PC-9 (cell line): ENCODE measurements at regions of chr1 and their contacts with region 1.

Region 1: DNA sequence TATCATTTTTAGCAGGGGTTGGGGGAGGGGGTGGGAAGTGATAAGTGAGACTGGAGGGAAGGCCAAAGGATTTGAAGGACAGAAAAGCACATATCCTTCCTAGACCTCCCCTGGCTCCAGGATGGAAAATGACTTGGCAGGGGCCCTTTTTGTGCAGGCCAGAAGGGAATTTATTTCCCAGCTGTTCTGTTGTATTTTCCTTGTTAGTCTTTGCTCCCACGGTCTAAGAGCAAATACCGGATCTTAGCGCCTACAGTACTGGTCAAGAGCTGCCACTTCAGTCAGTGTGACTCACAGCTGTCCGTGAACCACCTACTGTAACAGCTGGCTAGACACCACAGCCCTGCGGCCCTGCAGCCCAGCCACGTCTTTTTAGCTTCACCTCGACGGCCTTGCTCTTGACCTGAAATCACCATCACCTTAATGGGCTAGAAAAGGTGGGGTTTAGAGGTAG is 51.0 kb upstream of the ERRFI1 start:
- DNase-seq: peak; percentile 67 to 92
- H3K4me3 ChIP-seq: no peak overlapping the region
- H3K27ac ChIP-seq: peak overlapping the region; percentile 98
- H3K4me1 ChIP-seq: peaks cover 69% of the 10 kb centered on the region
- H3K27me3 ChIP-seq: no peaks in the 10 kb centered on the region
- CTCF ChIP-seq: no peak

Region 2: GRCh38 chr1:8040586-8040985 is 36.6 kb before region 1 on chr1:
- CTCF ChIA-PET with region 1: no interaction called
- POLR2A ChIA-PET with region 1: interaction called, 6 read pairs
- intact Hi-C with region 1: loop called (anchors 5 kb)
- DNase-seq: peak; percentile 82 to 90
- H3K4me3 ChIP-seq: no peak overlapping the region
- H3K27ac ChIP-seq: peak overlapping the region; percentile 76
- H3K4me1 ChIP-seq: peaks cover 32% of the 10 kb centered on the region
- H3K27me3 ChIP-seq: no peaks in the 10 kb centered on the region
- CTCF ChIP-seq: no peak

Region 3: GRCh38 chr1:8090241-8090702 is 13.1 kb after region 1 on chr1:
- CTCF ChIA-PET with region 1: no interaction called
- POLR2A ChIA-PET with region 1: interaction called, 7 read pairs
- intact Hi-C with region 1: loop called (anchors 1 kb)
- DNase-seq: peak in 1 of 2 experiments; percentile 67
- H3K4me3 ChIP-seq: no peak overlapping the region
- H3K27ac ChIP-seq: peak overlapping the region; percentile 96
- H3K4me1 ChIP-seq: peaks cover 53% of the 10 kb centered on the region
- H3K27me3 ChIP-seq: no peaks in the 10 kb centered on the region
- CTCF ChIP-seq: no peak

Region 4: GRCh38 chr1:8154621-8155052 is 77.5 kb after region 1 on chr1:
- CTCF ChIA-PET with region 1: no interaction called
- POLR2A ChIA-PET with region 1: no interaction called
- intact Hi-C with region 1: loop called (anchors 1 kb)
- DNase-seq: peak; percentile 81 to 95
- H3K4me3 ChIP-seq: no peak overlapping the region
- H3K27ac ChIP-seq: peak overlapping the region; percentile 99
- H3K4me1 ChIP-seq: peaks cover 31% of the 10 kb centered on the region
- H3K27me3 ChIP-seq: no peaks in the 10 kb centered on the region
- CTCF ChIP-seq: no peak

Region 5: GRCh38 chr1:8238851-8239305 is 161.7 kb after region 1 on chr1:
- CTCF ChIA-PET with region 1: no interaction called
- POLR2A ChIA-PET with region 1: interaction called, 21 read pairs
- intact Hi-C with region 1: no loop called
- DNase-seq: peak; percentile 60 to 87
- H3K4me3 ChIP-seq: no peak overlapping the region
- H3K27ac ChIP-seq: peak overlapping the region; percentile 95
- H3K4me1 ChIP-seq: peaks cover 24% of the 10 kb centered on the region
- H3K27me3 ChIP-seq: no peaks in the 10 kb centered on the region
- CTCF ChIP-seq: no peak; the same call in 1 of the 2 replicates